ENCODE measurements at regions of chr5 and their contacts with region 1.

Region 1: GRCh38 chr5:33891788-33892619 is at the start of gene ADAMTS12:
- DNase-seq: peak; percentile 60 to 81 (median 65)
- ATAC-seq: peak; percentile 28 to 87 (median 70)
- H3K4me3 ChIP-seq: peak within 1 kb of the TSS; percentile 7 to 61 (median 51)
- H3K27ac ChIP-seq: peak within 1 kb of the TSS in 10 of 12 donors; percentile 17 to 59 (median 46)
- H3K4me1 ChIP-seq: peaks cover 0 to 28% (median 6%) of the 10 kb centered on the region in 12 donors
- H3K27me3 ChIP-seq: peaks cover 0 to 45% (median 12%) of the 10 kb centered on the region in 9 donors
- CTCF ChIP-seq: no peak
- POLR2A ChIP-seq: no peak
- total RNA-seq, gene ADAMTS12: 1.0 to 4.7 (median 1.9) TPM

Region 2: DNA sequence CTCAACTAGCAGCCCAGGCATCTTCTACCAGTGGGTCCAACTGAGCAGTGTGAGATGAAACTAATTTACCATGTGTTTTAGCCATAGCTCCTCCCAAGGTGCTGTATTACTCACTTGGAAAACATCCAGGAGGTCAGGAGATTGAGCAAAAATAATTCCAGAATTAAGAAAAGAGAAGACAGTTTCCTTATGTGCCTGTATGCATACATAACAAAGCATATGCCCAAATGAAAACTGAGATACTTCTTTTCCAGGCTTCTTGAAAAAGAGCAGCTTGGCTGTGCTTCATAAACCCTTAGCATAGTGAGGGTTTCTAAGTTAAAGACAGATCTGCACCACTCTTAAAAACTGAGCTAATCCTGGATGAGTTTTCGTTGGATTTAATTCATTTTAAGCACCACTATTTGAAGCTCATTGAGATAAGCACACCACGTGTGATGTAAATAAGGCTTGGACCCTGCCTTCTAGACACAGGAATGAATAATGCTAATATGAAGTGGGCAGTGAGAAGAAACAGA is 119.6 kb before region 1 on chr5:
- intact Hi-C with region 1: loop called in 1 of 10 experiments (anchors 10 kb)
- DNase-seq: no peak
- ATAC-seq: peak in 1 of 4 donors; percentile 57
- H3K4me3 ChIP-seq: no peak overlapping the region
- H3K27ac ChIP-seq: peak overlapping the region in 4 of 12 donors; percentile 4 to 30 (median 19)
- H3K4me1 ChIP-seq: peaks cover 0 to 39% (median 2%) of the 10 kb centered on the region in 12 donors
- H3K27me3 ChIP-seq: peaks cover 0 to 2% (median 0%) of the 10 kb centered on the region in 9 donors
- CTCF ChIP-seq: no peak
- POLR2A ChIP-seq: no peak

Region 3: DNA sequence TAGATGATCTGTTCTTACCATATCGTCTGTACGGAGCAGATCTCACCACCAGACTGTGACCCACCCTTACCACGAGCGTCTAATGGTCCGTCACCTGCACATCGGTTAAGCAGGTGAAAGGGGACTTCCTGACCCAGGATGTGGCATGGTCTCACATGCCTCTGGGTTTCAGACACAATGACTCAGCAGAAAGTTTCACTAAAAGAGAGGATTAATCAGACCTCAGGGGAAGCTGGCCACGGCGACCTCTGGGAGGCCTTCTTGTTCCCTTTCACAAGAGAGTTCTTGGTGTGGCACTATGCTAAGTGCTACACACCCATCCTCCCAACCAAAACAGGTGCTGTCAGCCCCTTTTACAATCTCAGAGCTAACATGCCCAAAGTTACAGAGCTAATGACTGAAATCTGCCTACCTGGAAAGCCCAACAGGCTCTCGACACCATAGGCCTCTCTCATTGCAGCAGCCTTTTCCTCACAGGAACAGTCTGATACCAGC is 41.9 kb before region 1 on chr5:
- intact Hi-C with region 1: loop called in 1 of 10 experiments (anchors 5 kb)
- DNase-seq: no peak
- ATAC-seq: no peak
- H3K4me3 ChIP-seq: no peak overlapping the region
- H3K27ac ChIP-seq: no peak overlapping the region
- H3K4me1 ChIP-seq: peaks cover 0 to 33% (median 7%) of the 10 kb centered on the region in 12 donors
- H3K27me3 ChIP-seq: no peaks in the 10 kb centered on the region
- CTCF ChIP-seq: no peak
- POLR2A ChIP-seq: no peak

Region 4: DNA sequence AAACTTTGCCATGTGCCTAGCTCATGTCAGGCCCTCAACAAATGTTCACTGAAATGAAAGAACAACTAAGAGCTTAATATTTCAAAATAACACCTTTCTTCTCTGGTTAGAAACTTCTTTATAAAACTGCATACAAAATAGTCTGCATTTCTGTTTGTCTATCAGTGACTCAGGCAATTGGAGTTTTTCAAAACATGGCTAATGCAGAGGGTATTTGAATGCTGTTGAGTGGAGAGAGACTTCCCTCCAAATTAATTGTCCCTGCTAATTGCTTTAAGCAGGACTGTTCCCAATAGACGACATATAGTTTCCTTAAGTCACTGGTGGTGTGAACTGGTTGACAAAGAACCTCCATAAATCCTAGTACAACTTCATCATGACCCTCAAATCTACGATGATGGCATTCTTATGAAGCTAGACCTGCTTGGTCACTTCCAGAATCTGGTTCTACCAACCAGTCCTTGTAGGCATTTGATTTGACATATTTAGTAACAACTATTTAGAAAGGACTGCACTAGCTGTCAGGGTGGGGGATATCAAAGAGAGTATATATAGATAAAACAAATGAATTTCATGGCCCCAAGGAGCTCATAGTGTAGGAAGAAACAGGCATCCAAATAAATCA is 1253.8 kb after region 1 on chr5:
- intact Hi-C with region 1: no loop called
- DNase-seq: no peak
- ATAC-seq: no peak
- H3K4me3 ChIP-seq: no peak overlapping the region
- H3K27ac ChIP-seq: no peak overlapping the region
- H3K4me1 ChIP-seq: no peaks in the 10 kb centered on the region
- H3K27me3 ChIP-seq: no peaks in the 10 kb centered on the region
- CTCF ChIP-seq: no peak
- POLR2A ChIP-seq: no peak

Measured in heart left ventricle (tissue), 16 donors.